B cell (primary cell): ENCODE measurements at regions of chr7 and their contacts with region 1.

Region 1: GRCh38 chr7:108497082-108497725 is 28.7 kb downstream of the PNPLA8 start:
- DNase-seq: peak; percentile 81
- ATAC-seq: peak; percentile 94
- H3K4me3 ChIP-seq: no peak overlapping the region
- H3K4me3 Mint-ChIP-seq: no peak overlapping the region
- H3K27ac ChIP-seq: no peak overlapping the region
- H3K27ac Mint-ChIP-seq: peak overlapping the region; percentile 34
- H3K4me1 ChIP-seq: peaks cover 16% of the 10 kb centered on the region in 2 donors
- H3K4me1 Mint-ChIP-seq: peaks cover 32% of the 10 kb centered on the region
- H3K27me3 ChIP-seq: no peaks in the 10 kb centered on the region
- H3K27me3 Mint-ChIP-seq: no peaks in the 10 kb centered on the region
- CTCF ChIP-seq: peak; percentile 97

Region 2: GRCh38 chr7:108253275-108254044 is 243.7 kb before region 1 on chr7:
- CTCF ChIA-PET with region 1: no interaction called
- POLR2A ChIA-PET with region 1: no interaction called
- intact Hi-C with region 1: no loop called
- DNase-seq: no peak
- ATAC-seq: no peak
- H3K4me3 ChIP-seq: no peak overlapping the region
- H3K4me3 Mint-ChIP-seq: no peak overlapping the region
- H3K27ac ChIP-seq: no peak overlapping the region
- H3K27ac Mint-ChIP-seq: no peak overlapping the region
- H3K4me1 ChIP-seq: no peaks in the 10 kb centered on the region
- H3K4me1 Mint-ChIP-seq: no peaks in the 10 kb centered on the region
- H3K27me3 ChIP-seq: no peaks in the 10 kb centered on the region
- H3K27me3 Mint-ChIP-seq: peaks cover 9% of the 10 kb centered on the region
- CTCF ChIP-seq: no peak

Region 3: GRCh38 chr7:108384721-108385481 is 112.3 kb before region 1 on chr7:
- CTCF ChIA-PET with region 1: interaction called, 8 read pairs
- POLR2A ChIA-PET with region 1: no interaction called
- intact Hi-C with region 1: loop called (anchors 1 kb)
- DNase-seq: peak; percentile 25
- ATAC-seq: peak; percentile 73
- H3K4me3 ChIP-seq: no peak overlapping the region
- H3K4me3 Mint-ChIP-seq: no peak overlapping the region
- H3K27ac ChIP-seq: no peak overlapping the region
- H3K27ac Mint-ChIP-seq: no peak overlapping the region
- H3K4me1 ChIP-seq: peaks cover 0 to 4% of the 10 kb centered on the region in 2 donors
- H3K4me1 Mint-ChIP-seq: peaks cover 18% of the 10 kb centered on the region
- H3K27me3 ChIP-seq: peaks cover 0 to 2% (median 0%) of the 10 kb centered on the region in 4 experiments
- H3K27me3 Mint-ChIP-seq: no peaks in the 10 kb centered on the region
- CTCF ChIP-seq: peak; percentile 52

Region 4: GRCh38 chr7:108409146-108409545 is 88.1 kb before region 1 on chr7:
- CTCF ChIA-PET with region 1: no interaction called
- POLR2A ChIA-PET with region 1: no interaction called
- intact Hi-C with region 1: no loop called
- DNase-seq: no peak
- ATAC-seq: no peak
- H3K4me3 ChIP-seq: no peak overlapping the region
- H3K4me3 Mint-ChIP-seq: no peak overlapping the region
- H3K27ac ChIP-seq: no peak overlapping the region
- H3K27ac Mint-ChIP-seq: no peak overlapping the region
- H3K4me1 ChIP-seq: peaks cover 5 to 6% of the 10 kb centered on the region in 2 donors
- H3K4me1 Mint-ChIP-seq: peaks cover 6% of the 10 kb centered on the region
- H3K27me3 ChIP-seq: no peaks in the 10 kb centered on the region
- H3K27me3 Mint-ChIP-seq: no peaks in the 10 kb centered on the region
- CTCF ChIP-seq: no peak

Region 5: GRCh38 chr7:108421720-108422331 is 75.4 kb before region 1 on chr7:
- CTCF ChIA-PET with region 1: no interaction called
- POLR2A ChIA-PET with region 1: no interaction called
- intact Hi-C with region 1: no loop called
- DNase-seq: no peak
- ATAC-seq: no peak
- H3K4me3 ChIP-seq: no peak overlapping the region
- H3K4me3 Mint-ChIP-seq: no peak overlapping the region
- H3K27ac ChIP-seq: no peak overlapping the region
- H3K27ac Mint-ChIP-seq: no peak overlapping the region
- H3K4me1 ChIP-seq: peaks cover 10 to 28% of the 10 kb centered on the region in 2 donors
- H3K4me1 Mint-ChIP-seq: peaks cover 27% of the 10 kb centered on the region
- H3K27me3 ChIP-seq: peaks cover 0 to 37% (median 23%) of the 10 kb centered on the region in 4 experiments
- H3K27me3 Mint-ChIP-seq: peaks cover 24% of the 10 kb centered on the region
- CTCF ChIP-seq: no peak

Region 6: GRCh38 chr7:108468246-108468645 is 29.0 kb before region 1 on chr7:
- CTCF ChIA-PET with region 1: interaction called, 15 read pairs
- POLR2A ChIA-PET with region 1: no interaction called
- intact Hi-C with region 1: no loop called
- DNase-seq: no peak
- ATAC-seq: no peak
- H3K4me3 ChIP-seq: no peak overlapping the region
- H3K4me3 Mint-ChIP-seq: peak overlapping the region; percentile 71
- H3K27ac ChIP-seq: no peak overlapping the region
- H3K27ac Mint-ChIP-seq: no peak overlapping the region
- H3K4me1 ChIP-seq: peaks cover 9 to 11% of the 10 kb centered on the region in 2 donors
- H3K4me1 Mint-ChIP-seq: peaks cover 9% of the 10 kb centered on the region
- H3K27me3 ChIP-seq: peaks cover 0 to 15% (median 7%) of the 10 kb centered on the region in 4 experiments
- H3K27me3 Mint-ChIP-seq: peaks cover 24% of the 10 kb centered on the region
- CTCF ChIP-seq: no peak

Region 7: DNA sequence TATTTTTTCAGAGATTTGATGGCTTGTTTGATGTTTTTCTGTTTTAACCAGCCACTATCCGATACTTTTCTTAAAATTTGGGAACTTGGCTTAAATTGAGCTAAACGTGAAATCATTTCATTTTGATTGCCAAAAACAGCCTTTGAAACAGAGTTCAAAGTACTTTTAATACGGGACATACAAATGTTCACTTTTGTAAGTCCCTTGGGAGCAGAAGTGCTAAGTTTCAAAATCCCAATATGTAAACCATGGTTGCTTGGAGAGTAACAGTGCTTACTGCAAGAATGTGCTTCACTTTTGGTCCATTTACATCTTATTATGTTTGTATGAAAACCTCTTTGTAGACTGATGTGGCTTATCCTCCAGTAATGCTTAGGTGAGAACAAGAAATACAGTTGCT is 17.8 kb after region 1 on chr7:
- CTCF ChIA-PET with region 1: interaction called, 15 read pairs
- POLR2A ChIA-PET with region 1: no interaction called
- intact Hi-C with region 1: no loop called
- DNase-seq: no peak
- ATAC-seq: no peak
- H3K4me3 ChIP-seq: no peak overlapping the region
- H3K4me3 Mint-ChIP-seq: no peak overlapping the region
- H3K27ac ChIP-seq: peak overlapping the region in 1 of 2 donors; percentile 19
- H3K27ac Mint-ChIP-seq: no peak overlapping the region
- H3K4me1 ChIP-seq: peaks cover 10 to 13% of the 10 kb centered on the region in 2 donors
- H3K4me1 Mint-ChIP-seq: peaks cover 56% of the 10 kb centered on the region
- H3K27me3 ChIP-seq: no peaks in the 10 kb centered on the region
- H3K27me3 Mint-ChIP-seq: no peaks in the 10 kb centered on the region
- CTCF ChIP-seq: no peak

Region 8: DNA sequence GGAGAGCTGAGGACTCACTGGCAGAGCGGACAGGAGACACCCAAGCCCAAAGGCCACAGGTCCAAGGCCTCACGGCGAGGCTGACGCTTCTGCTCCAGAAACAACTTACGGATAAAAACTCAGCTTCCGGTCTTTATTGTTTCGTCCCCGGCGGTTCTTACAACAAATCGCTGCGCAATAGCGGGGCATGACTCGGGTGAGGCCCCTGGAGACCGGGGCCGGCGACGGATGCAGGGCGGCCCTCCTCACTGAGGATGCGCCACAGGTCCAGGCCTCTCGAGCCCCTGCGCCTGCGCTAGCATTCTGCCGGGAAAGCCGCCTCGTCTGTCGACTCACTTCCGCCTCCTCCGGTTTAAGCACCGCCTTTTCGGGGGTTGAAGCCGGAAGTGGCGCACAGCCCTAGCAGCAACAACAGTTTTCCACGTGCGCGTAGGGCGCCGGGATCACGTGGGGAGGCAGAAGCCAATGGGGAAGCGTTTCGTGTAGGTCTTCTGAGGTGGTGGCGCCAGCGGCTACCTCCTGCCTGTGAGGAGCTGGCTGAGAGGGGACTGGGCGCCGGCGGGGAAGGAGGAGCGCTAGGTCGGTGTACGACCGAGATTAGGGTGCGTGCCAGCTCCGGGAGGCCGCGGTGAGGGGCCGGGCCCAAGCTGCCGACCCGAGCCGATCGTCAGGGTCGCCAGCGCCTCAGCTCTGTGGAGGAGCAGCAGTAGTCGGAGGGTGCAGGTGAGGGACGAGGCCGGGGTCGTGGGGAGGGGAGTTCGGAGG is 72.4 kb after region 1 on chr7 and contains the starts of genes DNAJB9 and THAP5:
- CTCF ChIA-PET with region 1: interaction called, 17 read pairs
- POLR2A ChIA-PET with region 1: interaction called, 26 read pairs
- intact Hi-C with region 1: no loop called
- DNase-seq: peak; percentile 100
- ATAC-seq: peak; percentile 87
- H3K4me3 ChIP-seq: peak within 1 kb of the TSS; percentile 79 to 92 (median 89)
- H3K4me3 Mint-ChIP-seq: peak within 1 kb of the TSS; percentile 96
- H3K27ac ChIP-seq: peak within 1 kb of the TSS; percentile 99 to 100
- H3K27ac Mint-ChIP-seq: peak within 1 kb of the TSS; percentile 98
- H3K4me1 ChIP-seq: peaks cover 16 to 39% of the 10 kb centered on the region in 2 donors
- H3K4me1 Mint-ChIP-seq: peaks cover 51% of the 10 kb centered on the region
- H3K27me3 ChIP-seq: no peaks in the 10 kb centered on the region
- H3K27me3 Mint-ChIP-seq: no peaks in the 10 kb centered on the region
- CTCF ChIP-seq: no peak
- total RNA-seq, gene DNAJB9: 19.5 and 21.1 TPM in 2 replicates
- total RNA-seq, gene THAP5: 48.8 and 49.0 TPM in 2 replicates

Region 9: GRCh38 chr7:108723381-108723814 is 226.2 kb after region 1 on chr7:
- CTCF ChIA-PET with region 1: no interaction called
- POLR2A ChIA-PET with region 1: no interaction called
- intact Hi-C with region 1: no loop called
- DNase-seq: no peak
- ATAC-seq: no peak
- H3K4me3 ChIP-seq: no peak overlapping the region
- H3K4me3 Mint-ChIP-seq: no peak overlapping the region
- H3K27ac ChIP-seq: no peak overlapping the region
- H3K27ac Mint-ChIP-seq: no peak overlapping the region
- H3K4me1 ChIP-seq: no peaks in the 10 kb centered on the region
- H3K4me1 Mint-ChIP-seq: no peaks in the 10 kb centered on the region
- H3K27me3 ChIP-seq: no peaks in the 10 kb centered on the region
- H3K27me3 Mint-ChIP-seq: peaks cover 4% of the 10 kb centered on the region
- CTCF ChIP-seq: no peak